ENCODE measurements at regions of chr17 and their contacts with region 1.

Region 1: GRCh38 chr17:64145757-64146417 is 15.9 kb upstream of the ERN1 start:
- ATAC-seq: peak; percentile 83 to 92 (median 90)
- H3K4me3 ChIP-seq: peak overlapping the region; percentile 48 to 59 (median 54)
- H3K27ac ChIP-seq: peak overlapping the region; percentile 73 to 83
- H3K4me1 ChIP-seq: peaks cover 8 to 11% of the 10 kb centered on the region in 2 donors

Region 2: GRCh38 chr17:63919311-63919723 is 226.6 kb before region 1 on chr17:
- in situ Hi-C with region 1: loop called in 5 of 9 experiments (anchors 25 kb)
- ATAC-seq: peak; percentile 56 to 93 (median 74)
- H3K4me3 ChIP-seq: no peak overlapping the region
- H3K27ac ChIP-seq: no peak overlapping the region
- H3K4me1 ChIP-seq: no peaks in the 10 kb centered on the region

Region 3: DNA sequence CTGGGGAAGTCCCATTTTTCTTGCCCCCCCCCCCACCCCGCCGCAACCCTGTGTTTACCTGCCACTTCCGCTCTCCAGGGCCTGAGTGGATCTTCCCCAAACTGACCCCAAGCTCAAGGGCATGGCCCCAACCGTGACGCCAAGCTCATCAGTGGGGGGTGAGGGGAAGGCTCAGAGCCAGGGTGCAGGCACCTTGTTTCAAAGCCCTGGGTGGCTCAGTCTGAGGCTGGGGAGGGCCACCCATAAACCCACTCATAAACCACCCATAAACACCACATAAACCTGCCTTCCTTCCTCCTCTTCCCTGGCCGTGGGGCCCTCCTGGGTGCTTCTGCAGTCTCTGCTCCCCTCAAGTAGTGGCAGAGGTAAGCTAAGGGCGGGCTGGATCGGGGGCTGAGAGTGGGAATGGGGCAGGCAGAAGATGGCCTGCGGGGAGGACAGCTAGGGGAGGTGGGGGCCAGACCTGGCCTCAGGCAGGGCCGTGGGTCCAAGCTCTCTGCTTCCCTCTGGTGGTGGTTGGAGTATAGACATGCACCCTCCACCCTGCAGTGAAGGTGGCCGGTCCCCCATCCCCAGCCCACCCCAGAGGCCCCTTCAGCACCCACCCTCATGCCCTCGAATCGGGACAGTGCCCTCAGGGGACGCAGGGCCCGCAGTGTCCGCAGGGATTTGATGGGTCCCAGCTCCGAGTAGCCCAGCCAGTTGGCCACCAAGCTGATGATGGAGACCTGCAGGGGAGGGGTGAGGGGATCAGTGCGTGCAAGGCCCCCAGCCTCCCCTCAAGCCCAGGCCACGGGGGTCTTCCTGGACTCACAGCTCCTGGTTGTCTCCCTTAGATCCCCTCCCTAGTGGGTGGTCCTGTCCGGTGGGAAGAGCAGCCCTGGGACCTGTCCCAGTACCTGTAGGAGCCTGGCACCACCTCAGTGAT is 199.2 kb before region 1 on chr17:
- in situ Hi-C with region 1: loop called in 2 of 9 experiments (anchors 25 kb)
- ATAC-seq: peak; percentile 69 to 90 (median 74)
- H3K4me3 ChIP-seq: no peak overlapping the region
- H3K27ac ChIP-seq: no peak overlapping the region
- H3K4me1 ChIP-seq: no peaks in the 10 kb centered on the region

Region 4: DNA sequence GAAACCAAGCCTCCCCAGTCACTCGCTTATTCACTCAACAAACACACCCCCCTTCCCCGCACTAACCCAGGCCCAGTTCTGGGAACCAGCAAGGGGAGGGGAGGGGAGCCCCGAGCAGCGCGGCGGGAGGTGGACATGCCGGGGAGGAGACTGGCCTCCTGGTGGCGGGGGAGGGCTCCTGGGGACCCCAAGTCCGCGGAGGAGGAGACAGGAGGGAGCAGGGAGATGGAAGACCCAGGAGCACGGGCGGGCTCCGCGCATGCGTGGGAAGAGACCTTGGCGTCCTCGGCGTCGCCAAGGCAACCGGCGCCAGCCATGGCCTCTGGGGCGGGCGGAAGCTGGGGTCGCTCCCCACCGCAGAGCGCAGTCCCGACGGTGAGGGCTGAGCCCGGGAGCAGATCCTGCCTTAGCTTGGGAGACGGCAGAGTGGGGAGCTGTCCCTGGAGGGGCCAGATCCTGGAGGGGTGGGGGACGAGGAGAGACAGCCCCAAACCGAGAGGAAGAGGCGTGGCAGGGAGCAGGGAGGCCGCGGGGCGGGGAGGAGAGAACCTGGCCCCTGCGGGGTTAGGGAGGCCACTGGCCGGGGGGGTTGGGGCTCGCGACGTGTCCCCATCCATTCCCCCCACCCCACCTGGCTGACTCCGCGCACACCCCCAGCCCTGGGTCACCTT is 147.7 kb before region 1 on chr17 and contains the start of gene PRR29:
- in situ Hi-C with region 1: no loop called
- ATAC-seq: peak; percentile 84 to 97 (median 94)
- H3K4me3 ChIP-seq: peak within 1 kb of the TSS; percentile 37 to 59 (median 51)
- H3K27ac ChIP-seq: no peak within 1 kb of the TSS
- H3K4me1 ChIP-seq: peaks cover 0 to 7% of the 10 kb centered on the region in 2 donors
- total RNA-seq, gene PRR29: 0.36 to 25.1 (median 0.53) TPM

Region 5: DNA sequence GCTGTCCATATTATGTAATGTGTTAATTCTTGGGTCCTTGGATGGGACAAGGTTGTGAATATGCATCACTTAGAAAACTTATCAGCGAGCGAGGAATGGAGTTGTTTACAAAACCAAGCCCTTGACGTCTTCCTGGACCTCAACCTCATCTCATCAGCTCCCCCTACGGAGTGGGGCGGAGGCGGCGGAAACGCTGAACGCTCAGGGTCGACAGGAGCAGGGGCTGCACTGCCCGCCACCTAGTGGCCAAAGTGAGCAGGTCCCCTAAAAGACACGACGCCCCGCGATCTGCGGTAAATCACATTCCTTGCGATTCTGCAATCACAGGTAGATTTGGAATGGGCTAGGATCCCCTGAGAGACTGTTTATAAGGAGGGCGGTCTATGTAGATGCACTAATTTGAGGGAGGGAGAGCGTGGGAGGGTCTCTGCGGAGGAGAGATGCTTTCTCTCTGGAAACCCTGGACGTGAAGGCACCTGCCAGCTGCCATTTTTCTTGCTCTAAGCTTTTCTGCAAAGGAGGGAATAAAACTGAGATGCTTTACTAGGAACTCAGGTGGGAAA is 120.1 kb before region 1 on chr17:
- in situ Hi-C with region 1: loop called in 1 of 9 experiments (anchors 25 kb)
- ATAC-seq: peak in 4 of 8 experiments; percentile 36 to 94 (median 84)
- H3K4me3 ChIP-seq: no peak overlapping the region
- H3K27ac ChIP-seq: no peak overlapping the region
- H3K4me1 ChIP-seq: no peaks in the 10 kb centered on the region

Region 6: DNA sequence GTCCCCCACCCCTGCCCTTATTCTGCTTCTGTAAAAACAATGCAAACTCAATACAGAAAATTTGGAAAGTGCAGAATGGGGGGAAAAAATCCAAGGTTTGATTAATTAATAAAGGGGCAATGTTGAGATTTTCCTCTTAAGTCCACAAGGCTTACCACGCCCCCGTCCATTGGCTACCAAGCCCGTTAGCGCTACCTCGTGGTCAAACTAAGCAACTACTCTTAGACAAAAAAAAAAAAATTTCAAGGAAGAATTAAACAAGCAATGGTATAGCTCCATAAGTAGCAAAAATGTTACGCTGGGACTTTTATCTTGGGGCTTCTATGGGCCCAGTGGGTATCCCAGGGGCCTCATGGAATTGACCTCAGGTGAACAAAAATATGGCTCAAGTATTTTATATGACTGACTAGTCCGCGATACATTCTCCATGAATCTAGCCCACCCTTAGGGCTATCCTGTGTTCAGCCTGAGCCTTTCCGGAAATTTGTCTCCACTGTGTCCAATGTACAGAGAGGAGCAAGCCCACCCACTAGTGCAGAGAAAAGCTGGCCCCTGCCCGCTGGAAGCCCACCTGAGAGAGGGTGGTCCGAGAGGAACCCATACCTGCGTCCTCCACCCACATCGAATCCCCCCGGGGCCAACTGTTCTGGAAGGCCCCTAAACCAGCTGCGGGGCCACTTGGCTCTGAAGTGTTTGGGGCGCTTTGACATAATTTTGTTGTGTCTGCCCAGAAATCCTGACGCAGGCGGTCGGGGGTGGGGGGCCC is 136.3 kb after region 1 on chr17:
- in situ Hi-C with region 1: loop called in 1 of 9 experiments (anchors 5 kb)
- ATAC-seq: peak; percentile 31 to 86 (median 50)
- H3K4me3 ChIP-seq: no peak overlapping the region
- H3K27ac ChIP-seq: no peak overlapping the region
- H3K4me1 ChIP-seq: peaks cover 0 to 6% of the 10 kb centered on the region in 2 donors

Region 7: DNA sequence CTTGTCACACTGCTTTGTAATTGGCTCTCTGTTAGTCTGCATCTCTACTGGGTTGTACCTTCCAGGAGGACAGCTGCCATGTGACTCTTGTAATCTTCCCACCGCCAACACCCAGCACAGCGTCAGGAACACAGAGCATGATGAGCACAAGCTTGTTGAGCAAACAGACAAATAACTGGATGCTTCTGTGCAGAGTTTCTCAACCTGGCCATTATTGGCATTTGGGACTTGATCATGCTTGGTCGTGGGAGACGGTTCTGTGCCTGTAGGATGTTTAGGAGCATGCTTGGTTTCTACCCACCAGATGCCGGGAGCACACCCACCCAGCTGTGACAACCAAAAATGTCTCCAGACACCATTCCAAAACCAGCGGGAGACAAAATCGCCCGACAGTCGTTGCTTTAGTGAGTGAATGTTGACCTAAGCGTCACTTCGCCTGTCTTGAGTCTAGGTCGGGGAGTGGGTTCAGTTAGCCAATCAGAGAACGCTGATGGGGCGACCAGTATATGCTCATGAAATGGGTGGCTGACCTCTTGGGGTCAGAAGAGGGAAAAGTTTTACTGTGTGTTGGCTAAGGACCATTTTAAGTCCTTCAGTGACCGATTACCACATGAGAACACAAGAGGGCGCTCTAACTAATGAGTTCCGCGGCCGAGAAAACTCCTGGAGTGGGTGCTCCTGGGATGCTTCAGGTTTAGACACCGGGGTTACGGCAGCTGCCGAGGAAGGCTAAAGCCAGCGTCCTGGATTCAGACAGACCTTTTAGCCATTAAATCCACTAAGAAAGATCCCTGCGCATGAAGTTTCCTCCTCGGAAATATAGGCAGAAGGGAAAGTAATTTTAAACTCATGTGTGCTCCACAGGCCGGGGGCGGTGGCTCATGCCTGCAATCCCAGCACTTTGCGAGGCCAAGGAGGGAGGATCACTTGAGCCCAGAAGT is 175.0 kb after region 1 on chr17:
- in situ Hi-C with region 1: no loop called
- ATAC-seq: peak in 7 of 8 experiments; percentile 49 to 96 (median 65)
- H3K4me3 ChIP-seq: no peak overlapping the region
- H3K27ac ChIP-seq: no peak overlapping the region
- H3K4me1 ChIP-seq: no peaks in the 10 kb centered on the region

Measured in motor neuron (in vitro differentiated cells).